H1 (cell line): ENCODE measurements at regions of chr16 and their contacts with region 1.

Region 1: DNA sequence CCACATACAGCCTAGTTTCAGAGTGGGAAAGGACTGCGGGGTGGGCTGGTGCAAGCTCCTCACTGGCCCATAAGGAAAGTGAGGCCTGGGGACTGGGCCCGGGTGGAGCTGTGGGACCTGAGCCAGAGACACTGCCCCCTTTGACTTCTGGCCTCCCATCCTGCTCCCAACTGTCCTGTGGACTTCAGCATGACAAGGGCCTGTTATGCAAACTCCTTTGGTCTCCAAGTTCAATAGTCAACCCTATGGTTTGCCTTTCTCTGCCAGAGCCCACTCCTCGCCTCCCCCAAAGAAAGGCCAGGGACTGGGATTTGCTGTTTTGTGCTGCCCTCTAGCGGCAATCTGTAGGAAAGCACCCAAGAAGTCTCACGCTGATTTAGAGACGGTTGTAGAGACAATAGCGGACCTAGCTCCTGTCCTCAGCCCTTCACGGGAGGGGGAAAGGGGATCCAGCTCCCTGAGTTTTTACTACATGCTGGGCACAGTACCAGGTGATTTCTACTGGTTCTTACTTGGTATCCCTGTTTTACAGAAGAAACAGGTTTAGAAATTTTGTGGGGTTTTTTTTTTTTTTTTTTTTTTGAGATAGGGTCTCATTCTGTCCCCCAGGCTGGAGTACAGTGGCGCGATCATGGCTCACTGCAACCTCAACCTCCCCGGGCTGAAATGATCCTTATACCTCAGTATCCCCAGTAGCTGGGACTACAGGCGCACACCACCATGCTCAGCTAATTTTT is 1.2 kb upstream of the TLCD3B start:
- DNase-seq: peak; percentile 51 to 86
- H3K4me3 ChIP-seq: peak overlapping the region in 1 of 4 experiments; percentile 90; a peak in 3 of 8 replicates
- H3K27ac ChIP-seq: no peak overlapping the region
- H3K4me1 ChIP-seq: peaks cover 0 to 26% (median 19%) of the 10 kb centered on the region in 4 experiments; a peak in 6 of 7 replicates
- H3K27me3 ChIP-seq: peaks cover 0 to 14% (median 5%) of the 10 kb centered on the region in 4 experiments; a peak in 2 of 7 replicates
- CTCF ChIP-seq: peak; percentile 71 to 93 (median 89)
- EP300 ChIP-seq: peak in 1 of 2 experiments; percentile 20; a peak in 1 of 3 replicates
- POLR2A ChIP-seq: no peak
- RAD21 ChIP-seq: peak; percentile 92 to 95

Region 2: GRCh38 chr16:29700253-29700987 is 331.8 kb before region 1 on chr16:
- CTCF ChIA-PET with region 1: interaction called, 10 read pairs
- POLR2A ChIA-PET with region 1: interaction called, 5 read pairs
- DNase-seq: peak in 1 of 2 experiments; percentile 84
- H3K4me3 ChIP-seq: peak overlapping the region in 1 of 4 experiments; percentile 35; a peak in 1 of 8 replicates
- H3K27ac ChIP-seq: no peak overlapping the region
- H3K4me1 ChIP-seq: peaks cover 0 to 11% (median 5%) of the 10 kb centered on the region in 4 experiments; a peak in 5 of 7 replicates
- H3K27me3 ChIP-seq: no peaks in the 10 kb centered on the region
- CTCF ChIP-seq: peak; percentile 86 to 90 (median 87)
- EP300 ChIP-seq: 0 out of 3 replicates have a peak, but pooled peaks of 1 of the 2 experiments have one; percentile 41
- POLR2A ChIP-seq: no peak
- RAD21 ChIP-seq: peak; percentile 92

Region 3: GRCh38 chr16:29848420-29849297 is 183.6 kb before region 1 on chr16:
- CTCF ChIA-PET with region 1: interaction called, 12 read pairs
- POLR2A ChIA-PET with region 1: no interaction called
- DNase-seq: peak; percentile 33 to 90
- H3K4me3 ChIP-seq: no peak overlapping the region
- H3K27ac ChIP-seq: no peak overlapping the region
- H3K4me1 ChIP-seq: no peaks in the 10 kb centered on the region; a peak in 1 of 7 replicates
- H3K27me3 ChIP-seq: no peaks in the 10 kb centered on the region
- CTCF ChIP-seq: peak; percentile 88 to 99 (median 94)
- EP300 ChIP-seq: no peak
- POLR2A ChIP-seq: no peak
- RAD21 ChIP-seq: peak; percentile 69 to 85

Region 4: DNA sequence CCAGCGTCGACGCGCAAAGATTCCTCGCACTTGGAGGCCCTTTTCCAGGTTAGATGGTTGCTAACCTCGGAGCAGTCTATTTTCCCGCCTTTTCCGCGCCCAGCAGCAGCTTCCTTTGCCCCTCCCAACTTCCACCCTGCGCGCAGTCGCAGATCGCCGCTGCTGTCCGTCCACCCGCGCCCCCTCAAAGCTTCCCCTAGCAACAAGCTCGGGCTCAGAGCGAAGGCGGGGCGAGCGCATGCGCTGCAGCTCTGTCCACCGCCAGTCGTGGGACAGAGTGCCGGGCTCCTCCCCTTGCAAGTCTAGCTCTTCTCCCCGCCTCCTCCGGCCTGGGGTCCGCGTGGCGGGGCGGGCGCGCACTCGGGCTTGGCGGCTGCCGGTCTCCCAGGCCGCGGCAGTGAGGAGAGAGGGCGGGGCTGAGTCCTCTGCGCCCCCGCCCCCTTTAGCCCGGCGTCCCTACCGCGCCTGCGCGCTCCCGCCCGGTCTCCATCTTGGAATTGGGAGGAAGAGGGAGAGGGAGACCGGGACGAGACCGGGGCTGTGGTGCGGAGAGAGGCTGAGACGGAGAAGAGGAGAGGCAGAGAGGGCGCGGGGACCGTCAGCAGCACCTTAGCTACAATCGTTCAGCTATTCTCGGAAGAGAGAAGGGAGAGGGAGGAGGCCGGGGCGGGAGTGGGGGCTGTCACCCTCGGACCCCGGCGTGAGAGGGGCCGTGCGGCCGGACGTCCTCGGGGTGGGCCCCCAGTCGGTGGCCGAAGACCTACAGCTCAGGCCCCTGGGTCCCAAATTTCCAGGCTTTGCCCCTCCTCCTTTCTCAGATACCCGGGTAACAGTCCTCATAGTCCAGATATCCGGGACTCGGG is 58.6 kb before region 1 on chr16 and contains the start of gene TAOK2:
- CTCF ChIA-PET with region 1: interaction called, 12 read pairs
- POLR2A ChIA-PET with region 1: interaction called, 3 read pairs
- DNase-seq: peak; percentile 99 to 100
- H3K4me3 ChIP-seq: peak within 1 kb of the TSS; percentile 80 to 90 (median 85)
- H3K27ac ChIP-seq: peak within 1 kb of the TSS; percentile 55; the same call in 1 of the 2 replicates
- H3K4me1 ChIP-seq: peaks cover 4 to 20% (median 7%) of the 10 kb centered on the region in 4 experiments
- H3K27me3 ChIP-seq: peaks cover 2 to 10% (median 9%) of the 10 kb centered on the region in 4 experiments
- CTCF ChIP-seq: no peak
- EP300 ChIP-seq: no peak
- POLR2A ChIP-seq: peak in 1 of 2 experiments; percentile 54; a peak in 1 of 3 replicates
- RAD21 ChIP-seq: no peak
- total RNA-seq, gene TAOK2: 32.6 and 34.2 TPM in 2 replicates

Region 5: GRCh38 chr16:30010844-30011713 is 21.2 kb before region 1 on chr16 and contains the start of gene DOC2A:
- CTCF ChIA-PET with region 1: interaction called, 15 read pairs
- POLR2A ChIA-PET with region 1: interaction called, 10 read pairs
- DNase-seq: peak in 1 of 2 experiments; percentile 81
- H3K4me3 ChIP-seq: peak within 1 kb of the TSS; percentile 45 to 79 (median 74)
- H3K27ac ChIP-seq: no peak within 1 kb of the TSS
- H3K4me1 ChIP-seq: peaks cover 0 to 19% (median 13%) of the 10 kb centered on the region in 4 experiments; a peak in 6 of 7 replicates
- H3K27me3 ChIP-seq: peaks cover 0 to 23% (median 13%) of the 10 kb centered on the region in 4 experiments; a peak in 5 of 7 replicates
- CTCF ChIP-seq: no peak
- EP300 ChIP-seq: no peak
- POLR2A ChIP-seq: no peak
- RAD21 ChIP-seq: no peak; a peak in 1 of 4 replicates
- total RNA-seq, gene DOC2A: 10.3 and 13.9 TPM in 2 replicates

Region 6: DNA sequence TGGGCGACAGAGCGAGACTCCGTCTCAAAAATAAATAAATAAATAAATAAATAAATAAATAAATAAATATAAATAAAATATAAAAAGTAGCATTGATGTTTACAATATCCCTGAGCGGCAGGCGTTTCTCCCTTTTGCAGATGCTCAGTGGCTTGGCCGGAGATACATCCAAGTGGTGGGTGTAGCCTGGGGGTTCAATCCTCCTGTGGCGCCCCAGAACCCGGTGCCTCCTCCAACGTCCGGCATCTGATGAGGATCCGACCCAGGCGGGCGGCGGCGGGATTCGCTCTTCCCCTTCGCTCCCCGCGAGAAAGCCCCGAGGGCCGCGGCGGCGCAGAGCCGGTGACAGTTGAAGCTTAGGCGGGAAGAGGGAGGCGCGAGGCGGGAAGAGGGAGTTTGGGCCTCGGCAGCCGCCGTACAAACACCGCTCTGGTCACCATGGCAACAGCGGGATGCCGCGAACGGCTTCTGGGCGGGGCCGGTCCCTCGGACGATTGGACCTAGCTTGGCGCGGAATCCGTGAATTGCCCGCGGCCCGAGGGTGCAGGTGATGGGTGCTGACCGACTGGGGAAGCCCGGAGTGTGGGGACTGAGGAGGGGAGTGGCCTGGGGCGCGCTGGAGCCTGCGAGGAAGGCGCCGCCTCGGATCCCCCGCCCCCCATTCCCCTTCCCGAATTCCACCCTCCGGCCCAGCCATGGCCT is 20.6 kb after region 1 on chr16:
- CTCF ChIA-PET with region 1: interaction called, 23 read pairs
- POLR2A ChIA-PET with region 1: interaction called, 9 read pairs
- DNase-seq: peak in 1 of 2 experiments; percentile 98
- H3K4me3 ChIP-seq: peak overlapping the region; percentile 68 to 80 (median 78)
- H3K27ac ChIP-seq: no peak overlapping the region
- H3K4me1 ChIP-seq: peaks cover 0 to 4% (median 2%) of the 10 kb centered on the region in 4 experiments; a peak in 3 of 7 replicates
- H3K27me3 ChIP-seq: peaks cover 0 to 5% (median 2%) of the 10 kb centered on the region in 4 experiments; a peak in 2 of 7 replicates
- CTCF ChIP-seq: no peak
- EP300 ChIP-seq: peak in 1 of 2 experiments; percentile 51; a peak in 1 of 3 replicates
- POLR2A ChIP-seq: no peak
- RAD21 ChIP-seq: no peak

Region 7: DNA sequence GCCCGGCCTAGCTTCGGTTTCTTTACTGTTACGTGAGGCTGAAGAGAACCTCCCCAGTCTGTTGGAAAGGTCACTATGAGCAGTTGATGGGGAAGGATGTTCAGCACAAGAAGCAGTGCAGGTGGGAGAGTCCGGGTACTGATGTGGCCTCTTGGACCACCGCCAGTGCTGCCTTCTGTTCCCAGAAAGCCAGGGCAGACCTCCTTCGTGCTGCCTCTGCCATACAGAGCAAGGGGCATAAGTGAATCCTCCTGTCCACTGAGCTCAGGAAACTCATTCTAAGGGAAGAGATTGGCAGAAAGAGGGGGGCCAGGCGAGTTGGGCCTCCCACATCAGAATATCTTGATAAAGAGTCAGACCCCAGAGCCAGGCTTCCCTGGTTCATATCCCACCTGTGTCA is 47.2 kb after region 1 on chr16:
- CTCF ChIA-PET with region 1: no interaction called
- POLR2A ChIA-PET with region 1: no interaction called
- DNase-seq: no peak
- H3K4me3 ChIP-seq: no peak overlapping the region
- H3K27ac ChIP-seq: no peak overlapping the region
- H3K4me1 ChIP-seq: peaks cover 0 to 7% (median 1%) of the 10 kb centered on the region in 4 experiments; a peak in 2 of 7 replicates
- H3K27me3 ChIP-seq: no peaks in the 10 kb centered on the region
- CTCF ChIP-seq: no peak
- EP300 ChIP-seq: no peak
- POLR2A ChIP-seq: no peak
- RAD21 ChIP-seq: no peak

Region 8: DNA sequence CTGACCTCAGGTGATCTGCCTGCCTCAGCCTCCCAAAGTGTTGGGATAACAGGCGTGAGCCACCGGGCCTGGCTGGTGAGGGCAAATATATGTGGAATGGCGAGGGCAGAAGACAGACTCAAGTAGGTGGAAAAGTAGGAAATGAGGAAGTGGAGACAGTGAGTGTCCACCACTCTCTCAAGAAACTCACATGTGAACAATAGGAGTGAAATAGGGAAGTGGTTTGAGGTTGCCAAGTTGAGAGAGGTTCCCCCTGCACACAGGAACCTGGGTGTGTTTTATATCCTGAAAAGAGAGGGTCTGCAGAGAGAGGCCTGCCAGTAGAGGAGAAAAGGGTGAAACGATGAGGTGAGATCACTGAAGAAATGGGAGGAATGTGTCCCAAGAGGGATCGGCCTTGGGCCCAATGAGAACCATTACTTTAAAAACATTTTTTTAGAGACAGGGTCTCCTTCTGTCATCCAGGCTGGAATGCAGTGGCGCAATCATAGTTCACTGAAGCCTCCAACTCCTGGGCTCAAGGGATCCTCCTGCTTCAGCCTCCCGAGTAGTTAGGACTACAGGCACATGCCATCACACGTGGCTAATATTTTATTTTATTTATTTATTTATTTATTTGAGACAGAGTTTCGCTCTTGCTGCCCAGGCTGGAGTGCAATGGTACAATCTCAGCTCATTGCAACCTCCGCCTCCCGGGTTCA is 134.1 kb after region 1 on chr16:
- CTCF ChIA-PET with region 1: no interaction called
- POLR2A ChIA-PET with region 1: no interaction called
- DNase-seq: no peak
- H3K4me3 ChIP-seq: no peak overlapping the region
- H3K27ac ChIP-seq: no peak overlapping the region
- H3K4me1 ChIP-seq: no peaks in the 10 kb centered on the region
- H3K27me3 ChIP-seq: no peaks in the 10 kb centered on the region
- CTCF ChIP-seq: no peak
- EP300 ChIP-seq: no peak
- POLR2A ChIP-seq: no peak
- RAD21 ChIP-seq: no peak